Mammary epithelial cell (primary cell): ENCODE measurements at regions of chr19 and their contacts with region 1.

Region 1: DNA sequence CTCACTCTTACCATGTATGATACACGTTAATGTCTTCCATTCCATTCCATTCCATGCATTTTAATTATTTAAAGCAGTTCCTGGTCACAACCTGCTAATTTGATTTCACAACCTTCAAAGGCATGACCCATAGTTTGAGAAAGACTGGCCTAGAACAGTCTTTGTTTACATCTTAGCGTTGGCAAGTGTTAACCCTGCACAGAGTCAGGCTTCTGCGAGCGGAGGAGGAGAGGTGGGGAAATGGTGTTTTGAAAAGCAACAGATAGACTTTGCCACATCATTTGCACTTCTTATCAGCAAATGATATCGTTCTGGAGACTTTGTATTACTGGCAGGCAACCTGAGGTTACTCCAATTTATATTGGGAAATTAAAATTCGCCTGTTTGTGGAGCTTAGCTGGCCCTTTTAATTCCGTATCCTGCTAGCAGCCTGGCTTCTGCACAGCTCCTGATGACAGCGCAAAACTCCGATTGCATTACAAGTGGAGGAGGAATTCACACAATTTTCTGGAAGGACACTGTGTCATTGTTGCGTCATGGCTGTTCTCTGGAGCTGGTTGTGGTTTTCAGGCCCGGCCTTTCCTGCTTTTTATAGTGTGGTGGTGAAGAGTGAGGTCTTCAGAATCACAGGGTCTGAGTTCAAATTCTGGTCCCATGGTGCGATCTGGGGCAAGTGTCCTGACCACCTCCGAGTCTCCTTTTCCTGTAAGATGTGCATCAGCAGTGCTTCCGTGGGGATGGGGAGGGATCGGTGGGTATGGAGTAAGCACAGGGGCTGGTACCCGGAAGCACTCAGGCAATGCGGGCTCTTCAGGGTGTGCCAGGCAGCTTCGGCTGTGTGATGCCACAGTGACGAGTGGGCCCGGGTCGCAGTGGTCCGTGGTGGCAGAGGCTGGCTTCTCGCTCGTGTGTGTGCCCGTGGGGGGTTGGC is 49.1 kb upstream of the EHD2 start:
- DNase-seq: peak; percentile 95
- H3K4me3 ChIP-seq: no peak overlapping the region
- H3K27ac ChIP-seq: peak overlapping the region; percentile 87
- H3K4me1 ChIP-seq: peaks cover 42% of the 10 kb centered on the region
- H3K27me3 ChIP-seq: no peaks in the 10 kb centered on the region
- CTCF ChIP-seq: no peak

Region 2: DNA sequence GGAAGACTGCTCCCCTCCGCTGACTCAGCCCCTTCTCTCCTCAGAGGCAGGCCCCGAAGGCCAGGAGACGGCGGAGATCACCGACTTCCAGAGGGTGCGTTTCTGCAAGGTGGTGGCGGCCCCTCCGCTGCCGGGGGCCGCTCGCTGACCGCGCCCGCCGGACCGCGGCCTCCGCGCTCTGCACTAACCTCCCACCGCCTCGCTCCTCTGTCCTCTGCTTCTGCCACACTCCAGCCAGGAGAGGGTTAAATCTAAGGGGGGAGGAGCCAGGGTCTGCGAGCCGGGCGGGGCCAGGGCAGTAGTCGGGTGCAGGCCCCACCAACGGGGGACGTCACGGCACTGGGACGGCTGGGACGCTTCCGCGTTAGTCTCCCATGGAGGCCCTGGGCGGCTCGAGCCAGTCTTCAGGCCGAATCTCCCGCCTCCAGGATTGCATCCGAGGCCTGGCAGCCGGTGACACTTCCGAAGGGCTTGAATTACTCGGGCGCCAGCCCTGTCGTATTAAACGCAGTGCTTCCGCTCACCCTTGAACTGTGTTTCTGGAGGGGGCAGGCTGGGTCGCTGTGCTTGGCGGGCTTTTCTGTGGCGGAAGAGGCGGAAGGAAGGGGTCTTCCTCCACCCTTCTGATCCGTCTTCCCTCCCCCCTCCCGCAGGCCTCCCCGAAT is 390.7 kb before region 1 on chr19:
- CTCF ChIA-PET with region 1: no interaction called
- dilution Hi-C with region 1: loop called (anchors 10 kb)
- in situ Hi-C with region 1: no loop called
- intact Hi-C with region 1: no loop called
- DNase-seq: peak; percentile 85
- H3K4me3 ChIP-seq: peak overlapping the region; percentile 58 to 81 (median 73)
- H3K27ac ChIP-seq: peak overlapping the region; percentile 89
- H3K4me1 ChIP-seq: peaks cover 14% of the 10 kb centered on the region
- H3K27me3 ChIP-seq: no peaks in the 10 kb centered on the region
- CTCF ChIP-seq: no peak

Region 3: DNA sequence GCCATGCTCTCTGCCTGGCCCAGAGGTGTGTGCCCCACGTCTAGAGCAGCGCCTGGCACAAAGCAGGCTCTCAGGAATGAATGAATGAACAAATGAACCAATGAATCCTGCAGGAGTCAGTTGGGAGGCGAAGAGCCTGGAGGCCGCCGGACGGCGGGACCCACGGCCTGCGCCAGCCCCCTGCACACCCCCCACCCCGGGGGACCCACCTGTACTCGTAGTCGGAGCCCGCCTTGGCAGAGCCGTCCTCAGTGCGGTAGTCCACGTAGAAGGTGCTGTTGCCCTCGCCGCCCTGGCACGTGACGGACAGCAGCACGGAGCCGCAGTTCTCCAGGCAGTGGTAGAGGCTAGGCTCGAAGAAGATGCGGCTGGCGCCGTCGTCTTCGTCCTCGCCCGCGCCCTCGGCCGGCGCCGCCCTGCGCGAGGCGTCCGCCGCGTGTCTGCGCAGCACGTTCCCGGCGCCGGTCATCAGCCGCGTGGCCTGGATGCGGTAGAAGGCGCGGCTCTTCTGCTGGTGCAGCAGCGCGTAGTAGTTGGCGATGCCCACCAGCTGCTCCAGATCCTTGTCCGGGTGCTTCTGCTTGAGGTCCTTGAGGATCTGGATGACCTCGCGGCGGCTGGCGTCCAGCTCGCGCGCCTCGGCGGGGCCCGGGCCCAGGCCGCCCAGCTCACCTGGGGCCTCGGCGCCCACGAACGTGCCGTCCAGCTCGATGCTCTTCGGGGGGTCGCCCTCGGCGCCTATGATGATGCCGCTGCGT is 207.2 kb before region 1 on chr19:
- CTCF ChIA-PET with region 1: no interaction called
- dilution Hi-C with region 1: no loop called
- in situ Hi-C with region 1: no loop called
- intact Hi-C with region 1: no loop called
- DNase-seq: no peak
- H3K4me3 ChIP-seq: peak overlapping the region in 1 of 3 experiments; percentile 4
- H3K27ac ChIP-seq: no peak overlapping the region
- H3K4me1 ChIP-seq: no peaks in the 10 kb centered on the region
- H3K27me3 ChIP-seq: peaks cover 21% of the 10 kb centered on the region
- CTCF ChIP-seq: no peak

Region 4: GRCh38 chr19:47514869-47515588 is 149.1 kb before region 1 on chr19 and contains the start of gene NAPA:
- CTCF ChIA-PET with region 1: interaction called, 4 read pairs
- dilution Hi-C with region 1: no loop called
- in situ Hi-C with region 1: no loop called
- intact Hi-C with region 1: loop called (anchors 1 kb)
- DNase-seq: peak; percentile 100
- H3K4me3 ChIP-seq: peak within 1 kb of the TSS; percentile 84 to 99 (median 91)
- H3K27ac ChIP-seq: peak within 1 kb of the TSS; percentile 85
- H3K4me1 ChIP-seq: peaks cover 26% of the 10 kb centered on the region
- H3K27me3 ChIP-seq: no peaks in the 10 kb centered on the region
- CTCF ChIP-seq: no peak
- total RNA-seq, gene NAPA: 46.0 to 70.7 TPM

Region 5: GRCh38 chr19:47600246-47601179 is 63.6 kb before region 1 on chr19:
- CTCF ChIA-PET with region 1: interaction called, 6 read pairs
- dilution Hi-C with region 1: no loop called
- in situ Hi-C with region 1: no loop called
- intact Hi-C with region 1: loop called (anchors 2 kb)
- DNase-seq: peak; percentile 99
- H3K4me3 ChIP-seq: peak overlapping the region; percentile 57 to 90 (median 62)
- H3K27ac ChIP-seq: peak overlapping the region; percentile 70
- H3K4me1 ChIP-seq: peaks cover 17% of the 10 kb centered on the region
- H3K27me3 ChIP-seq: no peaks in the 10 kb centered on the region
- CTCF ChIP-seq: peak in 1 of 2 donors; percentile 2

Region 6: DNA sequence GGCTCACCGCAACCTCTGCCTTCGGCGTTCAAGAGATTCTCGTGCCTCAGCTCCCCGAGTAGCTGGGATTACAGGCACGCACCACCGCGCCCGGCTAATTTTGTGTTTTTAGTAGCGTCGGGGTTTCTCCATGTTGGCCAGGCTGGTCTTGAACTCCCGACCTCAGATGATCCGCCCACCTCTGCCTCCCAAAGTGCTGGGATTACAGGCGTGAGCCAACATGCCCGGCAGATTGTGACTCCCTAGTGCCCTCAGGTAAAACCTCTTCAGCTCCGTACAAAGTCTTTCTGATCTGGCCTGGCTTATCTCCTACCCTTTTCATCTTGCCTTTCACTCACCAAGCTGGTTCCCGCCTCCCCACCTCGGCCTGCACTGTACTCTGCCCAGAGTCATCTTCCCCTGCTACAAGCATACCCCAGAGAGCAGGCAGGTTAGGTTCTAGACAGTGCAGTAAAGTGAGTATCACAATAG is 40.1 kb before region 1 on chr19:
- CTCF ChIA-PET with region 1: interaction called, 10 read pairs
- dilution Hi-C with region 1: no loop called
- in situ Hi-C with region 1: no loop called
- intact Hi-C with region 1: no loop called
- DNase-seq: peak; percentile 60
- H3K4me3 ChIP-seq: no peak overlapping the region
- H3K27ac ChIP-seq: no peak overlapping the region
- H3K4me1 ChIP-seq: peaks cover 12% of the 10 kb centered on the region
- H3K27me3 ChIP-seq: no peaks in the 10 kb centered on the region
- CTCF ChIP-seq: no peak

Region 7: DNA sequence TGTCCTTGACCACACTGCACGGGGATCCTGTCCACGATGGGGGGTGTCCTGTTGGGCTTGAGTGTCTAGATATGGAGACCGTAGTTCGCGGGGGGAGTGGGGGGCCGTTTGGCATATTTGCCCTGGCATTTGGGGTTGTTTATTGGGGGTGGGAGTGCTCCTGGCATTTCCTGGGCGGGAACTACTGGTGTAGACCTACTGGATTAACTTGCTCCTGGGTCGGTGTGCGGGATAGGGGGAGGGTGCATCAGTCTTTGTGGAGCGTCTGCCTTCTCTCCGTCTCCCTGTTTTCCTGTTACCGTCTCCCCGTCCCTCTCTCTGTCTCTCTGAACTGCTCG is 16.3 kb before region 1 on chr19:
- CTCF ChIA-PET with region 1: no interaction called
- dilution Hi-C with region 1: no loop called
- in situ Hi-C with region 1: no loop called
- intact Hi-C with region 1: loop called (anchors 2 kb)
- DNase-seq: no peak
- H3K4me3 ChIP-seq: no peak overlapping the region
- H3K27ac ChIP-seq: no peak overlapping the region
- H3K4me1 ChIP-seq: peaks cover 11% of the 10 kb centered on the region
- H3K27me3 ChIP-seq: no peaks in the 10 kb centered on the region
- CTCF ChIP-seq: no peak

Region 8: GRCh38 chr19:47729992-47730889 is 66.1 kb after region 1 on chr19:
- CTCF ChIA-PET with region 1: no interaction called
- dilution Hi-C with region 1: loop called (anchors 5 kb)
- in situ Hi-C with region 1: no loop called
- intact Hi-C with region 1: no loop called
- DNase-seq: peak; percentile 52
- H3K4me3 ChIP-seq: peak overlapping the region; percentile 42 to 49 (median 45)
- H3K27ac ChIP-seq: peak overlapping the region; percentile 77
- H3K4me1 ChIP-seq: peaks cover 42% of the 10 kb centered on the region
- H3K27me3 ChIP-seq: no peaks in the 10 kb centered on the region
- CTCF ChIP-seq: no peak